B cell (primary cell): ENCODE measurements at regions of chr19 and their contacts with region 1.

Region 1: DNA sequence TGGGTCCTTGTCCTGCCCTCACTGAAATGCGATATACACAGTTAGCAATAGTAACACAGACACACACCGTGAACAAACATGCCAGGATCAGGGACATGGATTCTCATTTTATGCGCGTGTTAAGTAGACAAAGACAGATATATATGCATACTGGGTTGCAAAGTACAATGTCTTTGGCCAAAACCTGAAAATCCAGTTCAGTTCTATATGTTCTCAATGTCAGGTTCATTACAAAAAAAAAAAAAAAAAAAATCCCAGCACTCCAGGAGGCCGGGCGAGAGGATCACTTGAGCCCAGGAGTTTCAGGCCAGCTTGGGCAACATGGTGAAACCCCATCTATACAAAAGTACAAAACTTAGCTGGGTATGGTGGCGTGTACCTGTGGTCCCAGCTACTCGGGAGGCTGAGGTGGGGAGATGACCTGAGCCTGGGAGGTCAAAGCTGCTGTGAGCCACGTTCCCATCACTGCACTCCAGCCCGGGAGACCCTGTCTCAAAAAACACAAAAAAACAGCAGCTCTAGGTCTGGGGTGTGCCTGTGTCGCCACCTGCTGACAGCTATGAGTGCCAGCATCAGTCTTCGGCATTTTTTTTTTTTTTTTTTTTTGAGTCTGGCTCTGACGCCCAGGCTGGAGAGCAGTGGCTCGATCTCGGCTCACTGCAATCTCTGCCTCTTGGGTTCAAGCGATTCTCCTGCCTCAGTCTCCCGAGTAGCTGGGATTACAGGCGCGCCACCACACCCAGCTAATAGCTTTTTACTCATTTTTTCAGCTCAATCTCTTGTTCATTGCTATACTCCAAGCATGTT is 10.3 kb downstream of the AP2S1 start:
- DNase-seq: peak; percentile 82
- ATAC-seq: peak; percentile 95
- H3K4me3 ChIP-seq: no peak overlapping the region
- H3K4me3 Mint-ChIP-seq: no peak overlapping the region
- H3K27ac ChIP-seq: no peak overlapping the region
- H3K27ac Mint-ChIP-seq: no peak overlapping the region
- H3K4me1 ChIP-seq: peaks cover 0 to 6% of the 10 kb centered on the region in 2 donors
- H3K4me1 Mint-ChIP-seq: peaks cover 3% of the 10 kb centered on the region
- H3K27me3 ChIP-seq: no peaks in the 10 kb centered on the region
- H3K27me3 Mint-ChIP-seq: no peaks in the 10 kb centered on the region
- CTCF ChIP-seq: peak; percentile 85

Region 2: GRCh38 chr19:46529622-46530462 is 310.5 kb before region 1 on chr19:
- CTCF ChIA-PET with region 1: no interaction called
- POLR2A ChIA-PET with region 1: no interaction called
- intact Hi-C with region 1: loop called (anchors 5 kb)
- DNase-seq: peak; percentile 81
- ATAC-seq: peak; percentile 67
- H3K4me3 ChIP-seq: no peak overlapping the region
- H3K4me3 Mint-ChIP-seq: no peak overlapping the region
- H3K27ac ChIP-seq: no peak overlapping the region
- H3K27ac Mint-ChIP-seq: no peak overlapping the region
- H3K4me1 ChIP-seq: peaks cover 0 to 10% of the 10 kb centered on the region in 2 donors
- H3K4me1 Mint-ChIP-seq: peaks cover 10% of the 10 kb centered on the region
- H3K27me3 ChIP-seq: peaks cover 0 to 15% (median 3%) of the 10 kb centered on the region in 4 experiments
- H3K27me3 Mint-ChIP-seq: peaks cover 8% of the 10 kb centered on the region
- CTCF ChIP-seq: peak; percentile 98

Region 3: DNA sequence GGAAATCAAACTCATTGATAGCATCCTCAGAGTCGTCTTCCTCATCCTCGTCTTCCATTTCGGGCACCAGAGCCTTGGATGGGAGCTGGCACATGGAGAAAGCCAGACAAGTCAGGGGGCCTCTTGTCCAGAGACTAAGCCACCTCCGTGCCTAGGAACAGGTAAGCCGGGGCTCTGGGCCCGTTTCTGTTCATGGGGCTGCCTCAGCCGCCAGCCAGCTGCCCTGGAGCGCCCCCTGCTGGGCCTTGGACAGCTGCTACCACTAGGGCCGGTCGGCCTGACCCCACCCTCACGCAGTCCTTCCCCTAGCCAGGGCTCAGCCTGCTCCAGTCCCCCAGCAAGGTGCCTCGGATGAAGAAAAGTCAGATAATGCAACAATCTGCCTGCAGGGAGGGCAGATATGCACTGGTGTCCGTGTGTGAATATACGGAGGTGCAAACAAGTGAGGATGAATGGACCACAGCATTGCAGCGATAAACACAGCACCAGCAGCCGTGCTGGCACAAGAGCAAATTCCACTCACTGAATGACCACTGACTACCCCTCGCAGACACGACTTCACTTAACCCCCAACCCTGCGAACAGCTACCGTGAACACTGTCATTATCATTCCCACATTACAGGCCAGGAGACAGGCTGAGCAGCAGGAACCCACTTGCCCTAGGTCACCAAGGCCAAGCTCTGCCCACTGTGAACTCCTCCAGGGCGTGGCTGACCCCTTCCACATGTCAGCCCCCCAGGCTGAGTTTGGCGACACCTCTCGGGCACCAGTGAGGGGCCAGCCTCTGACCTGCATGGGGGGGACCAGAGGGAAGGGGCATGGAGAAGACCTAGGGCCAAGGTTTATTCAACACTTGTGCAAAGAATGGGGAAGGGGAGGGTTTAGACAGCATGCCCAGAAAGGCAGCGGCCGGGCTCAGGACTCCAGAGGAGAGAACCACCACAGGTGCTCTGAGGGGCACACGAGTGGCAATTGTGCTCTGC is 111.4 kb before region 1 on chr19:
- CTCF ChIA-PET with region 1: interaction called, 13 read pairs
- POLR2A ChIA-PET with region 1: no interaction called
- intact Hi-C with region 1: no loop called
- DNase-seq: peak; percentile 87
- ATAC-seq: peak; percentile 89
- H3K4me3 ChIP-seq: no peak overlapping the region
- H3K4me3 Mint-ChIP-seq: no peak overlapping the region
- H3K27ac ChIP-seq: no peak overlapping the region
- H3K27ac Mint-ChIP-seq: peak overlapping the region; percentile 80
- H3K4me1 ChIP-seq: peaks cover 10% of the 10 kb centered on the region in 2 donors
- H3K4me1 Mint-ChIP-seq: peaks cover 30% of the 10 kb centered on the region
- H3K27me3 ChIP-seq: no peaks in the 10 kb centered on the region
- H3K27me3 Mint-ChIP-seq: no peaks in the 10 kb centered on the region
- CTCF ChIP-seq: peak; percentile 92

Region 4: DNA sequence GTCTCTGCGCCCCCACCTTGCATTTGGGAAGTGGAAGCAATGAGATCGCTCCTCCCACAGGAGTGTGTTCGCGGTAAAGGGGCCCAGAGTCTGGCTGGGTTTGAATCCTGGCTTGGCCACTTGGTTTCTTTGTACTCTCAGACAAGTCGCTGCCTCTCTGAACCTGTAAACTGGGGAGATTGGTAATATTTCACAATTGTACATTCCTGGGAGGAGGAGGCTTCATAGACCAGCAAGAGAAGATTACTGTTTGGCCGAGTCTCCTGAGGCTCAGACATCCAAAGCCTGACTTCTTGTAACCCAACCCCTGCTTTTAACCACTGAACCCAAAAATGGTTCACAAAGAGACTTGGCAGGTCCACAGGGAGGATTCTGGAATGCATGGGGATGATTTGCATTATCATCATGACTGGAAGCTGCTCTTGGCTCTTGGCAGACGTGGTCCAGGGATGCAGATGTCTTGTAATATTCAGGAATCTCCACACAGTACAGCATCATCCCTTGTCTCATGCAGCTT is 80.5 kb before region 1 on chr19:
- CTCF ChIA-PET with region 1: interaction called, 245 read pairs
- POLR2A ChIA-PET with region 1: no interaction called
- intact Hi-C with region 1: loop called (anchors 1 kb)
- DNase-seq: no peak
- ATAC-seq: no peak
- H3K4me3 ChIP-seq: no peak overlapping the region
- H3K4me3 Mint-ChIP-seq: no peak overlapping the region
- H3K27ac ChIP-seq: no peak overlapping the region
- H3K27ac Mint-ChIP-seq: no peak overlapping the region
- H3K4me1 ChIP-seq: peaks cover 0 to 5% of the 10 kb centered on the region in 2 donors
- H3K4me1 Mint-ChIP-seq: peaks cover 2% of the 10 kb centered on the region
- H3K27me3 ChIP-seq: no peaks in the 10 kb centered on the region
- H3K27me3 Mint-ChIP-seq: no peaks in the 10 kb centered on the region
- CTCF ChIP-seq: no peak

Region 5: GRCh38 chr19:46803555-46803954 is 36.8 kb before region 1 on chr19:
- CTCF ChIA-PET with region 1: interaction called, 10 read pairs
- POLR2A ChIA-PET with region 1: no interaction called
- intact Hi-C with region 1: no loop called
- DNase-seq: no peak
- ATAC-seq: no peak
- H3K4me3 ChIP-seq: no peak overlapping the region
- H3K4me3 Mint-ChIP-seq: no peak overlapping the region
- H3K27ac ChIP-seq: no peak overlapping the region
- H3K27ac Mint-ChIP-seq: no peak overlapping the region
- H3K4me1 ChIP-seq: no peaks in the 10 kb centered on the region
- H3K4me1 Mint-ChIP-seq: no peaks in the 10 kb centered on the region
- H3K27me3 ChIP-seq: no peaks in the 10 kb centered on the region
- H3K27me3 Mint-ChIP-seq: no peaks in the 10 kb centered on the region
- CTCF ChIP-seq: no peak

Region 6: DNA sequence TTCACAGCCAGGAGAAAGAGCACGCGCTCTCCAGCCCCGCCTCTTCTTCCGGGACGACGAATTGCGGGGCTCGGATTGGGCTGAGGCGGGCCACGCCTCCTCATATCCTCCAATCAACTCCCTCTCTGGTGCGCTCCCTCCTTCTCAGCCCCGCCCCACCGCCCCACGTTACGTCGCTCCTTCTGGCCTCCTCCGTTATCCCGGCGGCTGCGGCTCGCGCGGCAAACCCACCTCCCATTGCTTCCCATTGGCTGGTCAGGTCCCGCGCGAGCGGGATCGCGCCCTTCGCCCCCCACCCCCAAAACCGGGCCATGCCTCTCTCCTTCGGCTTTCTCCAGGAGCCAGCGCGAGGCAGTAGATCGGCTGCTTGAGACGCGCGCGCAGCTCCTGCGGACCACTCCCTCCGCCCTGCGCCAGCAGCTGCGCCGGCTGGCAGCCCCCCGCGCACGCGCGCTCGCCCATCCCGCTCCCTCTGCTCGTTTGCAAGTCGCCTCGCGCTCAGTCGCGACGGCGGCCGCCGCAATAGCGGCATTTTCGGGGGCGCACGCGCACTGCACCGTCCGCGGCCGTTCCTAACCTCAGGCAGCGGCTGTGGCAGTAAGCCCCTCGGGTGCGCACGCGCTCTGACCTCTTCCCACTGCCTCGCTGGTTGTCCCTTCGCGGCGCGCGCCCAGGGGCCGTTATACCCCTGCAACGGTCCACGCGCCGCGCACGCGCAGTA is 19.9 kb after region 1 on chr19:
- CTCF ChIA-PET with region 1: interaction called, 10 read pairs
- POLR2A ChIA-PET with region 1: interaction called, 11 read pairs
- intact Hi-C with region 1: no loop called
- DNase-seq: peak; percentile 97
- ATAC-seq: peak; percentile 81
- H3K4me3 ChIP-seq: peak overlapping the region in 4 of 5 experiments; percentile 68 to 79 (median 77)
- H3K4me3 Mint-ChIP-seq: peak overlapping the region; percentile 91
- H3K27ac ChIP-seq: peak overlapping the region; percentile 71 to 77
- H3K27ac Mint-ChIP-seq: peak overlapping the region; percentile 95
- H3K4me1 ChIP-seq: peaks cover 40 to 41% of the 10 kb centered on the region in 2 donors
- H3K4me1 Mint-ChIP-seq: peaks cover 22% of the 10 kb centered on the region
- H3K27me3 ChIP-seq: no peaks in the 10 kb centered on the region
- H3K27me3 Mint-ChIP-seq: no peaks in the 10 kb centered on the region
- CTCF ChIP-seq: no peak

Region 7: DNA sequence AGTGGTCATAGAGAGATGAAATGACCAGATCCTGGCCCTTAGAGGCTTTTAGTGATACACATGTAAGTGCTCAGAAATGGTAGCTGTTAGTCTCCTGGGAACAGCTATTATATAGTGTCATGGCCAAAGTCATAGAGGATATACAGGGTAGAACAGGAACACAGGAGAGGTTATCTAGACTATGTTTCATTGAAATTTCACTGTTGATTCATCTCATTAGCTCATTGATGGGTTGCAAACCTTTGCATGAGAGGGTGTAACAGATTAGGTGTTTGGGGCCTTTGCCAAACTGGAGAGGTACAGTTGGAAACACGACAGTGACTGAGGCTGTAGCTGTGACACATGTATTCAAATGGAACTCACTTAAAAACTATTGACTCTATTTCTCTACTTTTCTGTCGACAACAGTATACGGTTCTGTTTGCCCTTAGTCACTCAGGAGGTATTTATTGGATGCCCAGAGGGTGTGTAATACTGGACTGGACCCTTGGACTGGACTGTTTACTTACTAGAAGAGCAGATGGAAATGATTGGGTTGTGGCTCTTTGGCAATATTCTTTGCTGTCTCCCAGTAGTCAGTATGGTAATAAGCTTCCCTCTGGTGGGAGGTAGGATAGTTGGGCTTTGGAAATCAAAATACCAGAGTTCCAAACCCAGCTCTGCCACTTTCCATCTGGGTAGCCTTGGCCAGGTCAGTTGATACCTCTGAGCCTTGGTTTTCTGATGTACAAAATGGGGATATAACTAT is 50.3 kb after region 1 on chr19:
- CTCF ChIA-PET with region 1: no interaction called
- POLR2A ChIA-PET with region 1: no interaction called
- intact Hi-C with region 1: no loop called
- DNase-seq: no peak
- ATAC-seq: no peak
- H3K4me3 ChIP-seq: no peak overlapping the region
- H3K4me3 Mint-ChIP-seq: no peak overlapping the region
- H3K27ac ChIP-seq: no peak overlapping the region
- H3K27ac Mint-ChIP-seq: no peak overlapping the region
- H3K4me1 ChIP-seq: peaks cover 15% of the 10 kb centered on the region in 2 donors
- H3K4me1 Mint-ChIP-seq: peaks cover 49% of the 10 kb centered on the region
- H3K27me3 ChIP-seq: no peaks in the 10 kb centered on the region
- H3K27me3 Mint-ChIP-seq: no peaks in the 10 kb centered on the region
- CTCF ChIP-seq: no peak